ENCODE measurements at regions of chr22 and their contacts with region 1.

Region 1: GRCh38 chr22:24994070-24994763 is 41.7 kb downstream of the KIAA1671 start:
- DNase-seq: no peak

Region 2: GRCh38 chr22:25027959-25028840 is 34.0 kb after region 1 on chr22:
- intact Hi-C with region 1: loop called (anchors 5 kb)
- DNase-seq: no peak

Measured in cardiac septum (tissue), 1 donor.